B cell (primary cell): ENCODE measurements at regions of chr1 and their contacts with region 1.

Region 1: GRCh38 chr1:45011837-45012638 is at the start of gene UROD:
- DNase-seq: peak; percentile 94
- ATAC-seq: peak; percentile 83
- H3K4me3 ChIP-seq: peak within 1 kb of the TSS; percentile 59 to 89 (median 78)
- H3K4me3 Mint-ChIP-seq: peak within 1 kb of the TSS; percentile 91
- H3K27ac ChIP-seq: peak within 1 kb of the TSS; percentile 66 to 79
- H3K27ac Mint-ChIP-seq: peak within 1 kb of the TSS; percentile 89
- H3K4me1 ChIP-seq: peaks cover 31 to 42% of the 10 kb centered on the region in 2 donors
- H3K4me1 Mint-ChIP-seq: peaks cover 43% of the 10 kb centered on the region
- H3K27me3 ChIP-seq: no peaks in the 10 kb centered on the region
- H3K27me3 Mint-ChIP-seq: no peaks in the 10 kb centered on the region
- CTCF ChIP-seq: no peak
- total RNA-seq, gene UROD: 57.3 and 65.5 TPM in 2 replicates

Region 2: GRCh38 chr1:44730741-44731512 is 281.1 kb before region 1 on chr1 and contains the start of gene RNU5D-1:
- CTCF ChIA-PET with region 1: interaction called, 21 read pairs
- POLR2A ChIA-PET with region 1: interaction called, 19 read pairs
- intact Hi-C with region 1: loop called (anchors 2 kb)
- DNase-seq: peak; percentile 97
- ATAC-seq: peak; percentile 74
- H3K4me3 ChIP-seq: peak within 1 kb of the TSS; percentile 17 to 68 (median 50)
- H3K4me3 Mint-ChIP-seq: peak within 1 kb of the TSS; percentile 92
- H3K27ac ChIP-seq: peak within 1 kb of the TSS; percentile 93 to 96
- H3K27ac Mint-ChIP-seq: peak within 1 kb of the TSS; percentile 100
- H3K4me1 ChIP-seq: peaks cover 12 to 24% of the 10 kb centered on the region in 2 donors
- H3K4me1 Mint-ChIP-seq: peaks cover 24% of the 10 kb centered on the region
- H3K27me3 ChIP-seq: no peaks in the 10 kb centered on the region
- H3K27me3 Mint-ChIP-seq: no peaks in the 10 kb centered on the region
- CTCF ChIP-seq: peak; percentile 87
- total RNA-seq, gene RNU5D-1: not detected in 2 replicates

Region 3: DNA sequence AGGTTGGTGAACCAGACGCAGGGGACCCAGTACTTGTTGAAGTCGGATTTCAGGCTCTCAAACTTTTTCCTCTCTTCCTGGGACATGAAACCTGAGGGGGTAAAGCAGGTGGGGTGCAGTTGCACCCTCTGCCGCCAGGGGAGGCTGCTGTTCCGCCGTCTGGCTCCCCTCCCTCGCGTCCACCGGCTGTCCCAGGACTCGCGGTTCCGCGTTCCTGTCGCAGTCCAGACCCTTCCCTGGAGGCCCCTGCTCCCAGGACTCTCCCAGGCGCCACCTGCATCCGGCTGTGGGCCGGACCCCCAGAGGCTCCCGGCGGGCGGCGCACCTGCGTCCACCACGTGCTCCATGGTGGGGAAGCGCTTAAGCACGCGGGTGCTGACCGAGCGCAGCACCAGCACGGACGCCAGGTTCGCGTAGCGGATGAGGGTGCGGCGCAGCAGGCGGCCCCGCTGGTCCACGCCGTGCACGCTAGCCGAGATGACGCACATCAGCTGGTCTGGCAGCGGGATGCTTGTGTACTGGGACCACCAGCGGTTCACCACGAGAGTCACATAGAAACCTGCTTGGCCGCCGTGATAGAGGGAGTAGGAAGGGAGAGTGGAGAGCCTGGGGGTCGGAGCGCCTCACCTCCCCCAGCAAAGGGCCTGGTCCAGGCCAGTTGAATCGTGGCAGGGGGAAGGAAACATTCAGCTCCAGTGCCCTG is 225.7 kb before region 1 on chr1:
- CTCF ChIA-PET with region 1: interaction called, 24 read pairs
- POLR2A ChIA-PET with region 1: interaction called, 7 read pairs
- intact Hi-C with region 1: no loop called
- DNase-seq: peak; percentile 88
- ATAC-seq: peak; percentile 72
- H3K4me3 ChIP-seq: peak overlapping the region in 4 of 5 experiments; percentile 53 to 68 (median 60)
- H3K4me3 Mint-ChIP-seq: peak overlapping the region; percentile 82
- H3K27ac ChIP-seq: peak overlapping the region; percentile 47 to 50
- H3K27ac Mint-ChIP-seq: peak overlapping the region; percentile 92
- H3K4me1 ChIP-seq: peaks cover 25 to 34% of the 10 kb centered on the region in 2 donors
- H3K4me1 Mint-ChIP-seq: peaks cover 31% of the 10 kb centered on the region
- H3K27me3 ChIP-seq: no peaks in the 10 kb centered on the region
- H3K27me3 Mint-ChIP-seq: no peaks in the 10 kb centered on the region
- CTCF ChIP-seq: peak; percentile 100

Region 4: GRCh38 chr1:44835738-44836675 is 176.0 kb before region 1 on chr1:
- CTCF ChIA-PET with region 1: interaction called, 5 read pairs
- POLR2A ChIA-PET with region 1: interaction called, 7 read pairs
- intact Hi-C with region 1: loop called (anchors 5 kb)
- DNase-seq: peak; percentile 89
- ATAC-seq: peak; percentile 98
- H3K4me3 ChIP-seq: no peak overlapping the region
- H3K4me3 Mint-ChIP-seq: peak overlapping the region; percentile 62
- H3K27ac ChIP-seq: no peak overlapping the region
- H3K27ac Mint-ChIP-seq: peak overlapping the region; percentile 55
- H3K4me1 ChIP-seq: peaks cover 0 to 7% of the 10 kb centered on the region in 2 donors
- H3K4me1 Mint-ChIP-seq: peaks cover 11% of the 10 kb centered on the region
- H3K27me3 ChIP-seq: no peaks in the 10 kb centered on the region
- H3K27me3 Mint-ChIP-seq: peaks cover 6% of the 10 kb centered on the region
- CTCF ChIP-seq: peak; percentile 85

Region 5: DNA sequence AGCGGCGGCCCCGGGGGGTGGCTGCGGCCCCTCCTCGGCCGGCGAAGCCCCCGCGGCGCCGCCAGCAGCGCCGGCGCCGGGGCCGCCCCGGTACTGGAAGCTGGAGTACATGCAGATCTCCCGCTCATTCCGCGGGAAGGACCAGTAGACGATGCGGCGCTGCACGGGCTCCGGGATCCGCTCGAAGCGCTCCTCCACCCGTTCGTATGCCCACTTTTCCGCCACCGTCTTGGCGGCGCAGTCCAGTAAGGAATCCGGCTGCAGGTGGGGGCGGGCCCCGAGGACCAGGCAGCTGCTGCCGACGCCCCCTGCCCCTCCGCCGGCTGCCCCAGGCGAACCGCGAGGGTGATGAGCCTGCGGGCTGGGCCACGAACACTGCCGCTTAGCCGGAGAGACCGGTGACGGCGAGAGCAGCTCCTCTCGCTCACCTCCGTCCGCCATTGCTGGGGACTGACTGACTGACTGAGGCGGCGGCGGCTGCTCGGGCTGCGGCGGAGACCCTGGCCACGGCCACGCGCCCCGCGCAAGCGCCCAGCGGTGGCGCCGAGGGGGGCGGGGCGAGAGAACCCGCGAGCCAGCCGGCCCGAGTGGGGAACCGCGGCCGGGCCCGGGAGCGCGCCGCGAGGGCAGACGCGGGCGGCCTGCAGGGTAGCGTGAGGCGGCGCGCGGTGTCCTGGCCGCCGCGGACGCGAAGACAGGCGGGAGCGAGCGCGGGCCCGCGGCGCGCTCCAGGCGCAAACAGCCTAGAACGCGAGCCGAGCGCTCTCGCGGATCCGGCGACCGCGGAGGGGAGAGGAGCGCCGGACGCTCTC is 194.1 kb after region 1 on chr1 and contains the start of gene ZSWIM5:
- CTCF ChIA-PET with region 1: interaction called, 4 read pairs
- POLR2A ChIA-PET with region 1: no interaction called
- intact Hi-C with region 1: loop called (anchors 5 kb)
- DNase-seq: peak; percentile 74
- ATAC-seq: peak; percentile 80
- H3K4me3 ChIP-seq: peak within 1 kb of the TSS; percentile 21 to 68 (median 66)
- H3K4me3 Mint-ChIP-seq: peak within 1 kb of the TSS; percentile 96
- H3K27ac ChIP-seq: no peak within 1 kb of the TSS
- H3K27ac Mint-ChIP-seq: peak within 1 kb of the TSS; percentile 65
- H3K4me1 ChIP-seq: peaks cover 11 to 15% of the 10 kb centered on the region in 2 donors
- H3K4me1 Mint-ChIP-seq: peaks cover 13% of the 10 kb centered on the region
- H3K27me3 ChIP-seq: peaks cover 0 to 47% (median 26%) of the 10 kb centered on the region in 4 experiments
- H3K27me3 Mint-ChIP-seq: peaks cover 38% of the 10 kb centered on the region
- CTCF ChIP-seq: no peak
- total RNA-seq, gene ZSWIM5: 0.85 and 1.7 TPM in 2 replicates

Region 6: DNA sequence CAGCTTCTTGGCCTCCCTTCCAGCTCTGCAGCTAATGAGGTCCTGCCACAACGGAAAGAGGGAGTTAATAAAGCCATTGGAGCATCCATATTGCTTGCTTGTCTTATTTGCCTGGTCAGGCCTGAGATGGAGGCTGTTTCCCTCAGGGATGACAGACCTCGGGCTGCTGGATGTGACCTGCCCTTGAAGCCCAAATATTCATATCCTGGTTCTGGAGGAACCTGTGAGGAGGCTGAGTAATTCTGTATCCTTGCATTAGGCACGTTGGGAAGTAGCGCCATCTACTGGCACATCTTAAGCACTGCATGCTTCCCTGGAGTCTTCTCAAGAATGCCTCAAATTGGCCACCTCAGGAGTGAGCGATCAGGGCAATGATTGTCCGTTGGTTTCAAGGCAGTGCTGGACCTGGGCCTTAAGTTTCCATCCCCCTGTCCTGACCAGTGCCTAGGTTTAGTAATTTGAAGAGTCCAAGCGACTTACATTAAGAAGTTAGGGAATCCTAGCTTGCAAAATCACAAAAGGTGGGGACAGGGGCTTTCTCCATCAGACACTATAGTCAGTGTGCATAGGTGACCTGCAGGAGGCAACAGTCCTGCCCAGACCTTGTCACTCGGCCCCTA is 558.0 kb after region 1 on chr1:
- CTCF ChIA-PET with region 1: interaction called, 18 read pairs
- POLR2A ChIA-PET with region 1: no interaction called
- intact Hi-C with region 1: no loop called
- DNase-seq: peak; percentile 85
- ATAC-seq: peak; percentile 97
- H3K4me3 ChIP-seq: no peak overlapping the region
- H3K4me3 Mint-ChIP-seq: no peak overlapping the region
- H3K27ac ChIP-seq: peak overlapping the region in 1 of 2 donors; percentile 0
- H3K27ac Mint-ChIP-seq: peak overlapping the region; percentile 56
- H3K4me1 ChIP-seq: no peaks in the 10 kb centered on the region
- H3K4me1 Mint-ChIP-seq: peaks cover 2% of the 10 kb centered on the region
- H3K27me3 ChIP-seq: no peaks in the 10 kb centered on the region
- H3K27me3 Mint-ChIP-seq: no peaks in the 10 kb centered on the region
- CTCF ChIP-seq: peak; percentile 99